Natural killer cell (primary cell): ENCODE measurements at regions of chr6 and their contacts with region 1.

Region 1: DNA sequence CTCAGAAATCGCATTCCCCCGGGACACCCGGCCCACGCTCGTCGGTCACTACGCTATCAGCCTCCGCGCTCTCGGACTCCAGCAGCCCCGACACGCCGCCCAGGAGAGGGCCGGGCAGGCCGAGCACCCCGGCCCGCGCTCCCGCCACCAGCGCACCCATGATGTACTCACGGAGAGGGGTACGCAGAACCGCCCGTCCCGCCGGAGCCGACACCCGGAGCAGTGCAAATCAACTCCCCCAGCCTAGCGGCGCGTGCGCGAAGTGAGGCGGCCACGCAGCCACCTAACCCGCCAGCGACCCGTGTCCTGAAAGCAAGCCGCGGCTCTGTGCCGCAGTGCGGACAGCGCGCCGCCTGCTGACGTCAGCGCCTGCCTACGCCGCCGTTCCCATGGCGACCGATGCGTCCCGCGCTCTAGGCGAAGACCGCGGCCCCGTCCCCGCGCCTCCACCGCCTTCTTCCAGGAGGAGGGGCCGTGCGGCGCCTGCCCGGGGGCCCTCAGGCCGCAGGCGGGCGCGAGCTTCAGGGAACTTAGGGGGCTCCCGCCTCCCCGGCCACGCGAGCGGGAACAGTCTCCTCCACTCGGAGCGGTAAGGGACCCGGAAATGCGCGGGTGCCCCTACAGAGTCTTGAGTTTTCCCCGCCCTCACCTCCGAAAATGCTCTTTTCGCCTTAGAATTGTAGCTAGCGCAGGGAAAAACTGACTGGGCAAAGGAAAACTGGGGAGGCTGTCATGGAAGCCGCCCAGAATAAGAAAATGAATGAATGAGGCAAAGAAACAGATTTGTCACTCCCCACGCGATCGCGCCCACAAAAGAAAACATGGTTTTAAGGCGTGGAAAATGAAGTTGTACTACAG is at the start of gene AHI1:
- DNase-seq: peak; percentile 90 to 91
- ATAC-seq: peak; percentile 73 to 87 (median 84)
- H3K4me3 ChIP-seq: peak within 1 kb of the TSS; percentile 81
- H3K4me3 Mint-ChIP-seq: no peak within 1 kb of the TSS
- H3K27ac ChIP-seq: peak within 1 kb of the TSS; percentile 89
- H3K27ac Mint-ChIP-seq: no peak within 1 kb of the TSS
- H3K4me1 ChIP-seq: no peaks in the 10 kb centered on the region
- H3K4me1 Mint-ChIP-seq: peaks cover 6 to 7% of the 10 kb centered on the region in 2 donors
- H3K27me3 ChIP-seq: no peaks in the 10 kb centered on the region
- H3K27me3 Mint-ChIP-seq: no peaks in the 10 kb centered on the region
- CTCF ChIP-seq: no peak
- total RNA-seq, gene AHI1: 24.0 to 40.3 (median 32.4) TPM

Region 2: GRCh38 chr6:133952815-133953633 is 1544.6 kb before region 1 on chr6 and contains the start of gene TBPL1:
- intact Hi-C with region 1: loop called (anchors 10 kb)
- DNase-seq: peak; percentile 77 to 96
- ATAC-seq: peak; percentile 83 to 96 (median 91)
- H3K4me3 ChIP-seq: peak within 1 kb of the TSS; percentile 69
- H3K4me3 Mint-ChIP-seq: peak within 1 kb of the TSS; percentile 97
- H3K27ac ChIP-seq: peak within 1 kb of the TSS; percentile 73
- H3K27ac Mint-ChIP-seq: peak within 1 kb of the TSS; percentile 94 to 95
- H3K4me1 ChIP-seq: peaks cover 8% of the 10 kb centered on the region
- H3K4me1 Mint-ChIP-seq: peaks cover 52 to 60% of the 10 kb centered on the region in 2 donors
- H3K27me3 ChIP-seq: no peaks in the 10 kb centered on the region
- H3K27me3 Mint-ChIP-seq: no peaks in the 10 kb centered on the region
- CTCF ChIP-seq: no peak
- total RNA-seq, gene TBPL1: 54.8 to 71.0 (median 59.9) TPM

Region 3: GRCh38 chr6:135054569-135055498 is 442.8 kb before region 1 on chr6 and contains the start of gene HBS1L:
- intact Hi-C with region 1: loop called (anchors 2 kb)
- DNase-seq: peak; percentile 93 to 100
- ATAC-seq: peak; percentile 95 to 99 (median 97)
- H3K4me3 ChIP-seq: peak within 1 kb of the TSS; percentile 89
- H3K4me3 Mint-ChIP-seq: peak within 1 kb of the TSS; percentile 97
- H3K27ac ChIP-seq: peak within 1 kb of the TSS; percentile 93
- H3K27ac Mint-ChIP-seq: peak within 1 kb of the TSS; percentile 98 to 100
- H3K4me1 ChIP-seq: peaks cover 12% of the 10 kb centered on the region
- H3K4me1 Mint-ChIP-seq: peaks cover 34 to 35% of the 10 kb centered on the region in 2 donors
- H3K27me3 ChIP-seq: no peaks in the 10 kb centered on the region
- H3K27me3 Mint-ChIP-seq: peaks cover 0 to 21% of the 10 kb centered on the region in 2 donors
- CTCF ChIP-seq: no peak
- total RNA-seq, gene HBS1L: 75.3 to 82.2 (median 80.1) TPM

Region 4: DNA sequence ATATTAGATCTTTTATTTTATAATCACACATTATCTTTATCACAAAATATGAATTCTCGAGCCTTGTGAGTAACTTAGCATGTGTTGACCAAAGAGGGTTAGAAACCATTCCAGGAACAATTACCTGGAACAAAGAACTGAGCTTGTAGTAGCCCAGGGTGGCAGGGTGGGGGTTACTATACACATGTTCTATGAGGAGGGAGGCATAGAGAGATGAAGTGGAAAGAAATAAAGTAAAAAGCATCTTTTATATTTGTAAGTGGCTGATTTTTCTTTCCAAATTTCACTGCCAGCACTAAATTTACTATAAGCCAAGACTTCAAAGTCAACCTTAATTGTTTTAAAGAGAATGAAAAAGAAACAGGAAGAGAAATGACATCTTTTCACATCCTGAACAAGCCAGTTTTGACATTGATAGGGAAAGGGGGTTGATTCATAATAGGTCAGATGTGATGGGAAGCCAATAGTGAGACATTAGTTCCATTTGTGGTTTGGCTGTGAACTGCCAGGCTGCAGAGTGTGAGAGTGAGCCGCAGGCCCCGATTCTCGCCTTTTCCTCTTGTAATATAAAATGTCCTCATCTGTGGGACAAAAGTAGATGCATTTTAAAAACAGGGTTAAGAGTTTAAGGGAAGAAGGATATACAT is 369.2 kb before region 1 on chr6:
- intact Hi-C with region 1: loop called (anchors 5 kb)
- DNase-seq: peak; percentile 44 to 80
- ATAC-seq: peak; percentile 90 to 96 (median 93)
- H3K4me3 ChIP-seq: no peak overlapping the region
- H3K4me3 Mint-ChIP-seq: peak overlapping the region; percentile 74
- H3K27ac ChIP-seq: peak overlapping the region; percentile 83
- H3K27ac Mint-ChIP-seq: peak overlapping the region; percentile 89 to 92
- H3K4me1 ChIP-seq: peaks cover 34% of the 10 kb centered on the region
- H3K4me1 Mint-ChIP-seq: peaks cover 43 to 45% of the 10 kb centered on the region in 2 donors
- H3K27me3 ChIP-seq: no peaks in the 10 kb centered on the region
- H3K27me3 Mint-ChIP-seq: no peaks in the 10 kb centered on the region
- CTCF ChIP-seq: no peak

Region 5: DNA sequence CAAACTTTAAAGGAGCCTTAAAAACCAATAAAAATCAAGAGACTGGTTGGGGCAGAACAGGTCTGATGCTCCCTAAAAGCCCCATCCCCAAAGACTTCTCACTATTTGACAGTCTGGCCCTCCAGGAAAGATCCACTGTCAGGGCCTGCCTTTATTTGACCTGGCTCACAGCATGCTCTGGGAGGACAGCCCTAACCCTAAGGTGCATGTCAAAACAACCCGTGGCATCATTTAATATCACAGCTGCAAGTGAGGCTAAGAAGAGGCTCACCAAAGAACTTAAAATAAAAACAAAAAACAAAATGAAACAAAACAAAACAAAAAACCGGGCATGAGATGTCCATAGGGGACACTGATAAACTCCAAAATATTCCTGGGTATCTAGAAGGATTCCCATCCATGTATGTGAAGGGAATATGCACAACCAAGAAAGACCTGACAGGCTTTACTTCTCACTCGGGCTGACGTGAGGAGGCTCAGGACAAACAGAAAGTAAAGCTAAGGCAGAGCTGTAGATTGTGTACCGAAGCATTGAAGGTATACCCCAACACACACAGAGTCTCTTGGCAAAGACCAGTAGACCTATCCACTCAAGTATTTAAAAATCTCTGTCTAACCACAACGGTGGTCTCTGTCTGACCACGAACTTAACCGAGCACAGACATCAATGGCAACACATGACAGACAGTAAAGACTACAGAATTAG is 57.4 kb before region 1 on chr6:
- intact Hi-C with region 1: no loop called
- DNase-seq: peak in 1 of 2 donors; percentile 34
- ATAC-seq: peak; percentile 78 to 84 (median 79)
- H3K4me3 ChIP-seq: no peak overlapping the region
- H3K4me3 Mint-ChIP-seq: peak overlapping the region; percentile 65
- H3K27ac ChIP-seq: peak overlapping the region; percentile 4
- H3K27ac Mint-ChIP-seq: peak overlapping the region; percentile 32 to 85
- H3K4me1 ChIP-seq: peaks cover 3% of the 10 kb centered on the region
- H3K4me1 Mint-ChIP-seq: peaks cover 17 to 18% of the 10 kb centered on the region in 2 donors
- H3K27me3 ChIP-seq: no peaks in the 10 kb centered on the region
- H3K27me3 Mint-ChIP-seq: no peaks in the 10 kb centered on the region
- CTCF ChIP-seq: no peak

Region 6: GRCh38 chr6:135535989-135536414 is 38.4 kb after region 1 on chr6:
- intact Hi-C with region 1: loop called (anchors 2 kb)
- DNase-seq: peak in 1 of 2 donors; percentile 64
- ATAC-seq: peak; percentile 46 to 66 (median 46)
- H3K4me3 ChIP-seq: no peak overlapping the region
- H3K4me3 Mint-ChIP-seq: peak overlapping the region; percentile 25
- H3K27ac ChIP-seq: no peak overlapping the region
- H3K27ac Mint-ChIP-seq: peak overlapping the region; percentile 22 to 36
- H3K4me1 ChIP-seq: peaks cover 11% of the 10 kb centered on the region
- H3K4me1 Mint-ChIP-seq: peaks cover 33 to 36% of the 10 kb centered on the region in 2 donors
- H3K27me3 ChIP-seq: no peaks in the 10 kb centered on the region
- H3K27me3 Mint-ChIP-seq: peaks cover 3 to 5% of the 10 kb centered on the region in 2 donors
- CTCF ChIP-seq: peak; percentile 79

Region 7: GRCh38 chr6:135627092-135627715 is 129.6 kb after region 1 on chr6:
- intact Hi-C with region 1: loop called (anchors 10 kb)
- DNase-seq: no peak
- ATAC-seq: no peak
- H3K4me3 ChIP-seq: no peak overlapping the region
- H3K4me3 Mint-ChIP-seq: no peak overlapping the region
- H3K27ac ChIP-seq: no peak overlapping the region
- H3K27ac Mint-ChIP-seq: peak overlapping the region in 1 of 2 donors; percentile 27
- H3K4me1 ChIP-seq: no peaks in the 10 kb centered on the region
- H3K4me1 Mint-ChIP-seq: peaks cover 29 to 39% of the 10 kb centered on the region in 2 donors
- H3K27me3 ChIP-seq: no peaks in the 10 kb centered on the region
- H3K27me3 Mint-ChIP-seq: no peaks in the 10 kb centered on the region
- CTCF ChIP-seq: no peak

Region 8: GRCh38 chr6:136289579-136290409 is 792.2 kb after region 1 on chr6 and contains the start of gene BCLAF1:
- intact Hi-C with region 1: loop called (anchors 1 kb)
- DNase-seq: peak; percentile 99 to 100
- ATAC-seq: peak; percentile 68 to 88 (median 74)
- H3K4me3 ChIP-seq: peak within 1 kb of the TSS; percentile 91
- H3K4me3 Mint-ChIP-seq: peak within 1 kb of the TSS; percentile 98
- H3K27ac ChIP-seq: peak within 1 kb of the TSS; percentile 97
- H3K27ac Mint-ChIP-seq: peak within 1 kb of the TSS; percentile 95 to 99
- H3K4me1 ChIP-seq: peaks cover 40% of the 10 kb centered on the region
- H3K4me1 Mint-ChIP-seq: peaks cover 52 to 63% of the 10 kb centered on the region in 2 donors
- H3K27me3 ChIP-seq: no peaks in the 10 kb centered on the region
- H3K27me3 Mint-ChIP-seq: no peaks in the 10 kb centered on the region
- CTCF ChIP-seq: no peak
- total RNA-seq, gene BCLAF1: 391 to 582 (median 465) TPM